Activated CD4-positive, alpha-beta T cell treated with anti-CD3 and anti-CD28 coated beads for 36 hours (primary cell): ENCODE measurements at regions of chr17 and their contacts with region 1.

Region 1: DNA sequence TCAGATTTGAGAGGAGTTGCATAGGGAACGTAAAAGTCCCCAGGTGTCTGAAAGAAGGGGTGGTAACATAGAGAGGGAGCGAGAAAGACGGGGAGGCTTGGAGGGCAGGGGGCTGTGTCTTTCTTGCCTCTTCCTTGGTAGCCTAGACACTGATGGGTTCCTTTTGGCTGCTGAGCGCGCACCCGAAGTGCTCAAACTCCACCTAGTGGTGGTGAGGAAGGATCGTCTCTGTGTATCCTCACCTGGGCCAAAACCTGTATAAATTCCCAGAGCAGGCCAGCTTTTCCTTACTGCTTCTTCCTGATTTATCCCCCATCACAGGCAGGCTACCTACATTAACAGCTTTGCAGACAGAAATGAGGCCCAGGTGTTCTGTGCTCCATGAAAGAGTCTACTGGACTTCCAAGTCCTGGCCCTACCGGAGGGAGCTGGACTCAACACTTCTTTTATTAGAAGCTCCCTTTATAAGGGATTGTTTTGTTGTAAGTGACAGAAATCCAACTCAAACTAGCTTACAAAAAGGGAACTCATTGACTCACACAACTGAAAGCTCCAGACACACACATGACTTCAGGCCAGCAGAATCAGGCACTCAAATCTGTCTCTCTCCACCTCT is 5.5 kb upstream of the SLC25A35 start:
- DNase-seq: peak; percentile 76
- ATAC-seq: peak; percentile 97
- H3K4me3 Mint-ChIP-seq: peak overlapping the region; percentile 16
- H3K27ac Mint-ChIP-seq: peak overlapping the region; percentile 6
- H3K4me1 Mint-ChIP-seq: peaks cover 8% of the 10 kb centered on the region
- H3K27me3 Mint-ChIP-seq: no peaks in the 10 kb centered on the region

Region 2: DNA sequence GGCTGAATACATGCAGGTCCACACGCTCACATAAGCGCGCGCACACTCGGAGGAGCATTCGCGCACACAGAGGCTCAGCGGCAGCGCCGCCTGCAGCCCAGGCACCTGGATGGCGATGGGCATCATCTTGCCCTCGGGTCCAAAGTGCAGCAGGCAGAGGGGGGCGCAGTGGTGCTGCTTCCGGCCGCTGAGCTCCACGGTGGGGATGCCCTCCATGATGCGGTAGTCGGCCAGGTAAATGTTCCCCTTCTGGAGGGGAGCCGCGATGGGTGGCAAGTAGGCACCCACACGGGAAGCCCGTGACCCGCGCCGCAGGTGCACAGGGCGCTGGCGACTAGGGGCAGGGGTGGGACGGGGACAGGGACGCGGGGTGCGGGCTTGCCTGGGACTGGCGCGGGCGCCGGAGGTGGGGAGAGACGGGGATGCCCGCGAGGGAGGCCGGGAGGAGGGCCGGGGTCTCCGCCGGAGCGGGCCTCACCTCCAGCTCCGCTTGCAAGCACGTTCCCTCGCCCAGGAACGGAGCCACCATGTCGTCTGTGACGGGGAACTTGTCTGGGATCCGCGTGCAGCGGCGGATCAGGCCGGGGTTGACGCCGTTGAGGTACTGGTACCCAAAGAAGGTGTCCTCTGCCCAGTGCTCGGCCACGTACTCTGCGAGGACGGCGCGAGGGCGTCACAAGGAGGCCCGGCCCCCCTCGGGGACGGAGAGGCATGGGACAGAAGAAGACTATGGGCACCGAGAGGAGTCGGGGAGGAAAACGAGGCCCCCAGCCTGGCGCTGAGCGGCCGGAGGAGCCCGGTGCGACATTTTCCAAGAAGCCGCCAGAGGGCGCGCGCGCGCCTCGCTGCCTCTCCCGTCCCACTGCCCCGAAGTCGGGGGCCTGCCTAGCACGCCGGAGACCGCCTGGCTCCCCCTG is 221.2 kb before region 1 on chr17:
- CTCF ChIA-PET with region 1: interaction called, 8 read pairs
- POLR2A ChIA-PET with region 1: no interaction called
- intact Hi-C with region 1: loop called in 1 of 2 experiments (anchors 5 kb)
- DNase-seq: peak; percentile 92
- ATAC-seq: peak; percentile 94
- H3K4me3 Mint-ChIP-seq: peak overlapping the region; percentile 94
- H3K27ac Mint-ChIP-seq: peak overlapping the region; percentile 92
- H3K4me1 Mint-ChIP-seq: peaks cover 12% of the 10 kb centered on the region
- H3K27me3 Mint-ChIP-seq: peaks cover 5% of the 10 kb centered on the region

Region 3: DNA sequence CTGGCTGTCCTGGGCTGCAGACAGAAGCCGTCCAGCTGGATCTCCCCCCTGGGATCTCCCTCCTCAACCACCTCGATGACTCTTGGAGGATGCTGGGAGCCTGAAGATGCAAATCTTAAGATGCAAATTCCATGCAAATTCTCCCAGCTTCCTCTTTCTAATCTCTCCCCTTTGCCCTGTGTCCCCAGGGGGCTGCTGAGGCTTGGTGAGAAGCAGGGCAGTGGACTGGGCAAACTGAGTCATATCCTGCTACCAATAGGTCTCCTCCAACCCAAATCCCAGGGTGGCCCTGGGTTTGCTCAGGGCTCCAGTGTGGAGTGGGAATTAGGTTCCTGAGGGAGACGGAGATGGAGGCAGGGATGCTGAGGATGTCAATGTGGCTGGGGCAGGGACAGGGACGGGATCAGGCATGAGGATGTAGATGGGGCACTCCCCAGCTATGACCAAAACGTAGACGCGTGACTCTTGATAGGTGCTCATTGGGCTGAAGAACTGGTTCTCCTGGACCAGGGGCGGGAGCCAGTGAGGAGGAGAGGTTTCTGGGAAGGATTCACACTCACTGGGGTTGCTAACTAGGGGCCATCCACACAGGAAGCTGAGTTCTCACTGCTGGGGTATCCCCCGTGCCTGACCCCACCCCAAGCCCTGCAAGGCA is 209.6 kb before region 1 on chr17:
- CTCF ChIA-PET with region 1: interaction called, 11 read pairs
- POLR2A ChIA-PET with region 1: no interaction called
- intact Hi-C with region 1: loop called in 1 of 2 experiments (anchors 1 kb)
- DNase-seq: no peak
- ATAC-seq: no peak
- H3K4me3 Mint-ChIP-seq: no peak overlapping the region
- H3K27ac Mint-ChIP-seq: no peak overlapping the region
- H3K4me1 Mint-ChIP-seq: peaks cover 14% of the 10 kb centered on the region
- H3K27me3 Mint-ChIP-seq: peaks cover 5% of the 10 kb centered on the region

Region 4: DNA sequence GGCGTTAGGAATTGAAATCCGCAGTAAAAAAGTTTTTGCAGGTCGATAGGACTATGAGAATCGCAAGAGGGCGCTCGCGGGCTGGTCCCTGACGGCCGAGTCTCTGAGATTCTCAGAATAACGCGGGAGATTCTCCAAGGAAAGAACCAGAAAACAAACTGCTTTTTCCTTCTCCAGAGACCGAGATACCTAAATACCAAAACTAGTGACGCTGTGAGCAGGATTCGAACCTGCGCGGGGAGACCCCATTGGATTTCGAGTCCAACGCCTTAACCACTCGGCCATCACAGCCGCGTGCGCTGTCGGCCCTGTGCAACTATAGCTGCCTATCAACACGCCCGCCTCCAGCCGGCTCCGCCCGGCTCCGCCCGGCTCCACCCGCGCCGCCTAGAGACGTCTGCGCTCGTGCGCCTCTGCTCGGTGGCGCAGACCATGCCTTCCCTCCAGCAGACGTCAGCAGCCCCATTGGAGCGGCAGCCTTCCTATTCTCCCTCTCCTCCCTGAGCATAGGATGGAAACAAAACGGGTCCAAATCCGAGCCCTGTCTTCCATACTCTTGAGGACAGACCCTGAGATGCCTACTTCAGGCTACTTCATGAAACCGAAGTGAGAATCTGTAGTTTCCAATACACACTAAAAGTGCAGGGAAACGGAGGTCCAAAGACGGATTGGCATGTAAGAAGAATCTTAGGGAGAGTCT is 161.9 kb before region 1 on chr17:
- CTCF ChIA-PET with region 1: interaction called, 8 read pairs
- POLR2A ChIA-PET with region 1: no interaction called
- intact Hi-C with region 1: loop called (anchors 1 kb)
- DNase-seq: peak; percentile 98
- ATAC-seq: peak; percentile 90
- H3K4me3 Mint-ChIP-seq: no peak overlapping the region
- H3K27ac Mint-ChIP-seq: no peak overlapping the region
- H3K4me1 Mint-ChIP-seq: no peaks in the 10 kb centered on the region
- H3K27me3 Mint-ChIP-seq: no peaks in the 10 kb centered on the region

Region 5: DNA sequence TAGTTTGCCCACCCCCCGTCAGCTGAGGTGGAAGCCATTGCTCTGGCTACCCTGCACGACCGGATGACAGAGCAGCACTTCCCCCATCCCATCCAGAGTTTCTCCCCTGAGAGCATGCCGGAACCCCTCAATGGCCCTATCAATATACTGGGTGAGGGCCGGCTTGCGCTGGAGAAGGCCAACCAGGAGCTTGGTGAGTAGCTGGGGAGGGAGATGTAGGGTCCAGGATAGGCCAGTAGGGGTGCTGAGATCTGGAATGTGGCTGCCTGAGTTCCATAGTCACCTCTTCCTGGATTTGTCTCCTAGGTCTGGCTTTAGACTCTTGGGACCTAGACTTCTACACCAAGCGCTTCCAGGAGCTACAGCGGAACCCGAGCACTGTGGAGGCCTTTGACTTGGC is 45.2 kb before region 1 on chr17:
- CTCF ChIA-PET with region 1: interaction called, 11 read pairs
- POLR2A ChIA-PET with region 1: interaction called, 3 read pairs
- intact Hi-C with region 1: no loop called
- DNase-seq: no peak
- ATAC-seq: no peak
- H3K4me3 Mint-ChIP-seq: no peak overlapping the region
- H3K27ac Mint-ChIP-seq: no peak overlapping the region
- H3K4me1 Mint-ChIP-seq: peaks cover 3% of the 10 kb centered on the region
- H3K27me3 Mint-ChIP-seq: no peaks in the 10 kb centered on the region

Region 6: GRCh38 chr17:8288336-8289102 is 12.2 kb before region 1 on chr17 and contains the start of gene RANGRF:
- CTCF ChIA-PET with region 1: interaction called, 10 read pairs
- POLR2A ChIA-PET with region 1: no interaction called
- intact Hi-C with region 1: no loop called
- DNase-seq: peak; percentile 91
- ATAC-seq: peak; percentile 94
- H3K4me3 Mint-ChIP-seq: peak within 1 kb of the TSS; percentile 84
- H3K27ac Mint-ChIP-seq: peak within 1 kb of the TSS; percentile 93
- H3K4me1 Mint-ChIP-seq: peaks cover 20% of the 10 kb centered on the region
- H3K27me3 Mint-ChIP-seq: no peaks in the 10 kb centered on the region
- total RNA-seq, gene RANGRF: 37.9 to 40.1 TPM

Region 7: GRCh38 chr17:8320990-8321389 is 20.3 kb after region 1 on chr17:
- CTCF ChIA-PET with region 1: interaction called, 15 read pairs
- POLR2A ChIA-PET with region 1: no interaction called
- intact Hi-C with region 1: no loop called
- DNase-seq: no peak
- ATAC-seq: peak; percentile 23
- H3K4me3 Mint-ChIP-seq: no peak overlapping the region
- H3K27ac Mint-ChIP-seq: no peak overlapping the region
- H3K4me1 Mint-ChIP-seq: peaks cover under 1% of the 10 kb centered on the region
- H3K27me3 Mint-ChIP-seq: peaks cover 14% of the 10 kb centered on the region